ENCODE measurements at regions of chr4 and their contacts with region 1.

Region 1: GRCh38 chr4:47836641-47837093 is 1.2 kb downstream of the CORIN start:
- DNase-seq: peak; percentile 74
- H3K4me3 Mint-ChIP-seq: peak overlapping the region; percentile 78
- H3K27ac Mint-ChIP-seq: no peak overlapping the region
- H3K4me1 Mint-ChIP-seq: peaks cover 25% of the 10 kb centered on the region
- H3K27me3 Mint-ChIP-seq: peaks cover 5% of the 10 kb centered on the region

Region 2: GRCh38 chr4:47668810-47669408 is 167.8 kb before region 1 on chr4:
- CTCF ChIA-PET with region 1: interaction called, 8 read pairs
- intact Hi-C with region 1: loop called (anchors 1 kb)
- DNase-seq: peak; percentile 27
- H3K4me3 Mint-ChIP-seq: no peak overlapping the region
- H3K27ac Mint-ChIP-seq: no peak overlapping the region
- H3K4me1 Mint-ChIP-seq: no peaks in the 10 kb centered on the region
- H3K27me3 Mint-ChIP-seq: peaks cover 5% of the 10 kb centered on the region

Region 3: GRCh38 chr4:47852136-47852535 is 15.5 kb after region 1 on chr4:
- CTCF ChIA-PET with region 1: interaction called, 15 read pairs
- intact Hi-C with region 1: no loop called
- DNase-seq: no peak
- H3K4me3 Mint-ChIP-seq: no peak overlapping the region
- H3K27ac Mint-ChIP-seq: no peak overlapping the region
- H3K4me1 Mint-ChIP-seq: no peaks in the 10 kb centered on the region
- H3K27me3 Mint-ChIP-seq: no peaks in the 10 kb centered on the region

Region 4: DNA sequence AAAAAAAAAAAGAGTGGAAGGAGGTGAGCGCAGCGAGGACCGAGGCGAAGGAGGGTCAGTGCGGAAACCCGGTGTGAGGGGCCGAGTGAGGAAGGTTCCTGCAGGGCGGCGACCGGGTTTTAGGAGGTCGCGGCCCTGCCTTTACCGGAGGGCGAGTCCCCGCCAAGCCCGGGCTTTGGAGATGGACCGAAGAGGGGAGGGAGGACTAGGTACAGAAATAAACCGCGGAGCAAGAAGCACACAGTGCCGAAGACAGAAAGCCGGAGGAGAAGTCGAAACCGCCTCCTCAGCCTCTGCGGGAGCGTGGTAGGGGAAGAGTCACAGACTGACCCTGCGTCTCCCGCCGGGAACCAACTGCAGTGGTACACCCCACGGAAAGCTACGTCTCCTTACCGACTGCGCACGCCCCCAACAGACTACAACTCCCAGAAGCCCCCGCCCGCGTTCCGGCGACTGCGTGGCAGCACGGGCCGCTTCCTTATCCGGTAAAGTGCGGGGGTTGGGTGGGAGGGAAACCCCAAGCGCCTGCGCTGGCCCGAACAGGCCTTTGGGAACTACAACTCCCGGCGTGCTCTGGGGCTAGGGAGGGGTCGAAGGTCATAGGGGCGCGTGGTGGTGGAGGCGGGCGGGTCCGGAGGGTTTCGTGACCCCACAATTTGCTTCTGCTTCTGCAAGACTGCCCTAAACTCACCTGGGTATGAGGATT is 77.7 kb after region 1 on chr4 and contains the start of gene NFXL1:
- CTCF ChIA-PET with region 1: interaction called, 3 read pairs
- intact Hi-C with region 1: loop called (anchors 1 kb)
- DNase-seq: peak; percentile 97
- H3K4me3 Mint-ChIP-seq: peak within 1 kb of the TSS; percentile 90
- H3K27ac Mint-ChIP-seq: peak within 1 kb of the TSS; percentile 91
- H3K4me1 Mint-ChIP-seq: peaks cover 29% of the 10 kb centered on the region
- H3K27me3 Mint-ChIP-seq: no peaks in the 10 kb centered on the region
- total RNA-seq, gene NFXL1: 10.4 to 11.4 TPM

Region 5: GRCh38 chr4:48047421-48047844 is 210.8 kb after region 1 on chr4:
- CTCF ChIA-PET with region 1: no interaction called
- intact Hi-C with region 1: loop called (anchors 5 kb)
- DNase-seq: peak; percentile 91
- H3K4me3 Mint-ChIP-seq: peak overlapping the region; percentile 1
- H3K27ac Mint-ChIP-seq: no peak overlapping the region
- H3K4me1 Mint-ChIP-seq: peaks cover 58% of the 10 kb centered on the region
- H3K27me3 Mint-ChIP-seq: no peaks in the 10 kb centered on the region

Region 6: DNA sequence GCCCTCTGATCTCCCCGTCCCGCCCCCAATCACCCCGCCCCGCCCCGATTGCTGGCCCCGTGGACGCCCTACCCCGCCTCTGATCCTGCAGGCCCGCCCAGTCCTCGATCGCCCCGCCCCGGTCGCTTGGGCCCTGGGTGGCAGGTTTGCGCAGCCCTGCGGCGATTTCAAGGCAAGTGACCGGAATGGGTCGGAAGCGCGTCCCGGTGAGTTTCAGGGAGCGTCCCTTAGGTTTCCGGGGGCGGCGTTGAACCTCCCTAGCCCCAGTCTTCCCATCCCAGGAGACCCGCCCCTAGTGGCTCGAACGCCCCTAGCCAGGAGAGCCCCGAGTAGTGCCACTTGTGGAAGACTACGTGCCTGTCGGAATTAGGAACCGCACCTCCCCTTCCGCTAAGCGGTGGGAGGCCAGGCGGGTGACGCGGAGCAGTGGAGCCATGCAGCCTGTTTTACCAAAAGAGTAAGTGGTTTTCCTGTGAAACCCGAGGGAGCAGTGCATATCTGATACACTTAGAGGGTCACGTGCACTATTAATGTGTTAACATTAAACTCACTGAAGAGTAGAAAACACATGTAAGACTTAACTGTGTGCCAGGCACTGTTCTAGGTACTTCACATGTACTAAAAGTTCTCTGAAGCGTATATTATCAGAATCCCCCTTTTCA is 433.3 kb after region 1 on chr4:
- CTCF ChIA-PET with region 1: no interaction called
- intact Hi-C with region 1: loop called (anchors 2 kb)
- DNase-seq: peak; percentile 93
- H3K4me3 Mint-ChIP-seq: peak overlapping the region; percentile 93
- H3K27ac Mint-ChIP-seq: peak overlapping the region; percentile 83
- H3K4me1 Mint-ChIP-seq: peaks cover 9% of the 10 kb centered on the region
- H3K27me3 Mint-ChIP-seq: no peaks in the 10 kb centered on the region

Measured in activated naive CD4-positive, alpha-beta T cell treated with anti-CD3 and anti-CD28 coated beads for 36 hours (primary cell).